ENCODE measurements at regions of chr7 and their contacts with region 1.

Region 1: DNA sequence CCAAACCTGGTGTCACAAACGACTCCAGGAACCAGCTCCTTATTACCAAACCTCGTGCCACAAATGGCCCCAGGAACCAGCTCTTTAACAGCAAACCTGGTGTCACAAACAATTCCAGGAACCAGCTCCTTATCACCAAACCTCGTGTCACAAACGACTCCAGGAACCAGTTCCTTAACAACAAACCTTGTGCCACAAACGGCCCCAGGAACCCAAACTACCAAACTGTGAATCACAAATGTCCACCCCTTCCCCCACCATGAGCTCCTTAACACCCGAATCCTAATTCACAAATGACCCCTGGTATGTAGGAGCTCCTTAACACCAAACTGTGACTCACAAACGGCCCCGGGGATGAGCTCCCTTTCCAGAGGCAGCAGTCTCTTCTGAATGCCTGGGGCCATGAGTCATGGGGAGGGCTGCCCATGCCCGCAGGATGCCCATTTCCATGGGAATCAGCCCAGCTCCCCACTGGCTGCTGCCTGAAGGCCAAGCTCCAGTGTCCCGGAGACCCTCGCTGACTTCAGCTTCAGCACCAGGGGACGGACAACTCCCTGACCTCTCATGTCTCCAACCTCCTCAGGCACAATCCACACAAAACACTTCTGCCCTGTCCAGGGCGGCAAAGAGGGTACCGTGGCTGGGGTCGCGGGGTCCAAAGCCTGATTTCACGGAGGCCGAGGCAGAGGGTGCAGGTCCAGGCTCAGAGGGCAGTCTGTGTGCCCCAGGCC is 213.1 kb downstream of the ELFN1 start:
- DNase-seq: peak; percentile 90 to 98
- H3K4me3 ChIP-seq: no peak overlapping the region; the same call in 1 of the 2 replicates
- H3K27ac ChIP-seq: peak overlapping the region; percentile 69
- H3K4me1 ChIP-seq: peaks cover 40% of the 10 kb centered on the region
- H3K27me3 ChIP-seq: no peaks in the 10 kb centered on the region
- CTCF ChIP-seq: no peak

Region 2: GRCh38 chr7:1842321-1843221 is 40.6 kb before region 1 on chr7:
- CTCF ChIA-PET with region 1: no interaction called
- POLR2A ChIA-PET with region 1: interaction called, 18 read pairs
- intact Hi-C with region 1: no loop called
- DNase-seq: peak in 1 of 2 experiments; percentile 20
- H3K4me3 ChIP-seq: no peak overlapping the region
- H3K27ac ChIP-seq: no peak overlapping the region
- H3K4me1 ChIP-seq: no peaks in the 10 kb centered on the region
- H3K27me3 ChIP-seq: no peaks in the 10 kb centered on the region
- CTCF ChIP-seq: no peak

Region 3: GRCh38 chr7:2182461-2182860 is 299.3 kb after region 1 on chr7:
- CTCF ChIA-PET with region 1: interaction called, 13 read pairs
- POLR2A ChIA-PET with region 1: no interaction called
- intact Hi-C with region 1: no loop called
- DNase-seq: no peak
- H3K4me3 ChIP-seq: no peak overlapping the region
- H3K27ac ChIP-seq: no peak overlapping the region
- H3K4me1 ChIP-seq: no peaks in the 10 kb centered on the region
- H3K27me3 ChIP-seq: no peaks in the 10 kb centered on the region
- CTCF ChIP-seq: no peak

Measured in PC-9 (cell line).